Right ventricle myocardium inferior (tissue), 1 donor: ENCODE measurements at regions of chr11 and their contacts with region 1.

Region 1: DNA sequence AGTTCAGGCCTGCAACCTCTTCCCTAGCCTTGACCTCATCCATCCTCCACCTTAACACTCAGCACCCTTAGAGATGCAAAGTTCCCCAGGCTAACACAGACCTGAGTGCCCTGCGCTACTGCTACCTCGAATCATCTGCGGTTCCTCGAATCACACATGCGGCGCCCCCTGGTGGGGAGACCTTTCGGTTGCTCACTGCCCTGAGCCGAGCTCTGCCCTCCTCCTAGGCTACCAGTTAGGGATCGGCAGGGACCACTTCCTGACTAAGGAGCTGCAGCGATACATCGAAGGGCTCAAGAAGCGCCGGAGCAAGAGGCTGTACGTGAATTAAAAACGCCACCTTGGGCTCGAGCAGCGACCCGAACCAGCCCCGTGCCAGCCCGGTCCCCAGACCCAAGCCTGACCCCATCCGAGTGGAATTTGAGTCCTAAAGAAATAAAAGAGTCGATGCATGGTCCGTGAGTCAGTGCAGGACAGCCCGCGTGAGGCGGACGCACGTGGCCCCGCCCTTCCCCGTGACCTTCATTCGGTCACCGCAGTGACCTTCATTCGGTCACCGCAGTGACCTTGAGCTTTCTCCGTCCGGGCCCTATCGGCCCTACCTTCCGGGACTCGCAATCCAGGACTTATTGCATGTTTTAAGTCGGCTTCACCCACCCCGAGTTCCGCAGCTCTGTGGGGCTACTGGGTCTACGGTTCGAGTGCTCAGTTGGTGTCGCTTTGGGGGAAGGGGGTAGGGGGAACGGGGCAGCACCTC is 830 bp upstream of the ESRRA start:
- DNase-seq: peak; percentile 94
- ATAC-seq: peak; percentile 54

Region 2: DNA sequence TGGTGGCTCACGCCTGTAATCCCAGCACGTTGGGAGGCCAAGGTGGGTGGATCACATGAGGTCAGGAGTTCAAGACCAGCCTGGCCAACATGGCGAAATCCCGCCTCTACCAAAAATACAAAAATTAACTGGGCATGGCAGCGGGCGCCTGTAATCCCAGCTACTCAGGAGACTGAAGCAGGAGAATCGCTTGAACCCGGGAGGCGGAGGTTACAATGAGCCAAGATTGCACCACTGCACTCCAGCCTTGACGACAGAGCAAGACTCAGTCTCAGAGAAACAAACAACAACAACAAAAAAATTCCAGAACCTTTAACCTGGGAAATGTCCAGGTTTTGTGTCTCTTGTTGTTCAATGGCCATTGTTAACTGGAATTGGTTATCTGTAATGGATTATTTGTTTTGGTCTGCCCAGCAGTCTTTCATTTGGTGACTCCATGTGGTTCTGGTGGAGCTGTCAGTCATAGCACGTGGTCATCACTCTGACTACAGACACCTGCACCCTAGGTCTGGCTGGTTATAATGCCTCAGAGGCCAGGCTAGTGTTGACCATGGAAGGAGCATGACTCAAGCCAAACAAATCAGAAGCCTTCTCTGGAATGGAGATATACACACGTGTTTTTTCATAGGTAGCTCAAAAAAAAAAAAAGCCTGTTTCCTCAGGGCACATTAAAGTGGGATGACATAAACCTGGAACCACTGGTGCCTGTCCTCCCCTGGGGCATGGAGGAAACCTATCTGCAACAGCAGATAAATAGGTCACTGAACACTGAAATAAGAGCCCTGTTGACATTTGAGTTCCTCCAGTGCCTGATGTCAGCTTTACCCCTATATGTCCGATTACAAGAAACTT is 682.3 kb before region 1 on chr11:
- intact Hi-C with region 1: no loop called
- DNase-seq: no peak
- ATAC-seq: no peak

Region 3: DNA sequence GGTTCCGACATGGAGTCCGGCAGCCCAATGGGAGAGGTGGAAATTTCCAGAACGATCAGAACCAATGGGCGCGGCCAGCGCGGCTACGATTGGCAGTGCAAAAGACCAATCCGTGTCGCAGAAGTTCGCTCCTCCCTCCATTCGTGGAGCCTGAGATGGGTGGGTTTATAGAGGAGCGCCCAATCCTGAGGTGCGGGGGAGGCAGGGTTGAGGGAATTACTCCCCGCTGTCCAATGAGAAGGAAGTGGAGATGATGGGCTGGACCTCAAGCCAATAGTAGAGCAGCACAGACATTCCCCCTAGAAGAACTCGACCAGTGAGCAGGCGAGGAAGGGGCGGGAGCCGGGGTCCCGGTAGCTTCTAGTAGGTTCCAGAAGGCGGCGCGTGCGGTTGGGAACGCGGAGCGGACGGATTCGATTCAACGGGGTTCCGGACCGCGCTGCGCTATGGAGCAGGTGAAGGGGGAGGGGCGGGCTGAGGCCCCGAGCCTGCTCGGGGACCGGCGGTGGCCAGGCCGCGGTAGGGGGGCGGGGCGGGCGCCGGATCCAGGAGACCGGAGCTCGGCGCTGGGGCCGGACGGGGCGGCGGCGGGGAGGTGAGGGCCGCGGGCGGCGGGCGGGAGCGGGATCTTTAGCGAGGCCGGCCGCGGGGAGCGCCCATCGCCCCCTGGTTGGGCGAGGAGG is 118.5 kb before region 1 on chr11 and contains the start of gene STIP1:
- intact Hi-C with region 1: loop called (anchors 5 kb)
- DNase-seq: peak; percentile 100
- ATAC-seq: peak; percentile 93
- total RNA-seq, gene STIP1: 124 TPM

Region 4: DNA sequence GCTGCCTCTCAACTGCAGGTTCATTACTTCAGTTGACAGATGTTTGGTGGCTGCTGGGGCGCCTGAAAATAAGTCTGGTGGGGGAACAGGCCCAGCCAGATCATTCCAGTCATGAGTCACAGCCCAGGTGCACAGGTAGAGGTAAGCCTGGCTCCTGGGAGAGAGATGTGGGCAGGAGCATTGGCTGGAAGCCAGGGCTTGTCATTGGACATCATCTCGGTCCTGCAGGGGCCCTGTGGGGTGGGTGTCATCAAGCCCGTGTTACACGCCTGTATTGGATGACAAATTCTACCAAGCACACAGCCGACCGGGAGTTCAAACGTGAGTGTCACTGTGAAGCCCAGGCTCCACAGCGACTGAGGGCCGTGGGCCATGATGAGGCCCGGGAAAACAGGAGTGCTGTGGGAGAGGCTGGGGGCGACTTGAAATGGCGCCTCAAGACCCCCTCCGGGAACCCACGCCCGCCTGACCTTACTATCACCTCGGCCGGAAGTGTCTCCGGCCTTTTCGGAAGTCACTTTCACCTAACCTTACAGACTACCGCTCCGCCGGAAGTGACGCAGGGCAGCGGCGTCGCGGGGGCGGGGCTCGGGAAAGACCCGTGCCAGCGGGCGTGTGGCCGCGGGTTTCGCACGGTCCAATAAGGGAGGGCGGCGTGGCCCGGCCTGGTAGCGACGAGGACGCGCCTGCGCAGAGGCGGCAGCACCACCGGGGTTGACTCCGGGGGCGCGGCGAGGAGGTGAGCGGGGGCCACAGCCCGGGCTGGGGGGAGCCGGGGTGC is 63.9 kb before region 1 on chr11 and contains the start of gene FKBP2:
- intact Hi-C with region 1: loop called (anchors 2 kb)
- DNase-seq: peak; percentile 99
- ATAC-seq: peak; percentile 81
- total RNA-seq, gene FKBP2: 50.6 TPM

Region 5: DNA sequence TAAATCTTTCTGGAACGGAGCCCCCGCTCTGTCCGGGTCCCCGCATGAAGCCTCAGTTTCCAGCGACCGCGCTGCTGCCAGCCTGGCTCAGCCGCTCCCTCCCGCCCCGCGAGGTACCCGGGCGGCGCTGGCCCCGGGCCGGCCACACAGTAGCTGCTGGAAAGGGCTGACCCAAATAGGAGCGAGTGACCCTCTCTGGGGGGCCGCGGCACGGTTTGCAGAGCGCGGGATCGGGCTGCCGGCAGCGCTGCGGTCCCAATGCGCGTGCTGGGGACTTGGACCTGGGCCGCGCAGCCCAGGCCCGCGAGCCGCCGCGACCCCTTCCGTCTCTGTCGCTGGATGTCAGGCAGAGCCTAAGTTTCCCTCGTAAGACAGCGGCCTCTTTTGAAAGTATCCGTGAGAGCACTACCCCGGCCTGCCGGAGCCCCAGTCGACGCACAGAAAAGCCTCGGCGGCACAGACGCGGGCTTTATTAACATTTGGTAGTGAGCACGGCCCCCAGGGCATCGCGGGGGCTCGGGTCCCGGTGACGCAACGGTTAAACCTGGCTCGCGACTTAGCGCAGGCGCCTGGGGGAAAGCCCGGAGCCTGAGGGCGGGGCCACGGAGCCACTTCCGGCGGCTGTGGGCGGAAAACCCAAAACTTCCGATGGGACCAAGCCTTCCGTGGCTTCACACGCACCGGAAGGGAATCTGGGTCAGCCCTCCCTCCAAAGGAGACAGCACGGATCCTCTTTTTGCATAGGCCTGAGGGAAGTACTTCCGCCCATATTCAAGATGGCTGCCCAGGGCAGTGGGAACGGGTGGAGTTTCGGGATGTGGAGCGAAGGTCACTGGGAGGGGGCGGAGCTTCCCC is 34.9 kb before region 1 on chr11:
- intact Hi-C with region 1: loop called (anchors 2 kb)
- DNase-seq: peak; percentile 98
- ATAC-seq: peak; percentile 90

Region 6: GRCh38 chr11:64355078-64355940 is 50.8 kb after region 1 on chr11:
- intact Hi-C with region 1: loop called (anchors 1 kb)
- DNase-seq: peak; percentile 89
- ATAC-seq: peak; percentile 54